Vagina (tissue), 2 donors: ENCODE measurements at regions of chr1 and their contacts with region 1.

Region 1: GRCh38 chr1:184664042-184664655 is 90.5 kb downstream of the EDEM3 start:
- DNase-seq: no peak
- H3K4me3 ChIP-seq: peak overlapping the region; percentile 25 to 27
- H3K27ac ChIP-seq: no peak overlapping the region
- H3K4me1 ChIP-seq: peaks cover 6% of the 10 kb centered on the region
- H3K27me3 ChIP-seq: no peaks in the 10 kb centered on the region
- CTCF ChIP-seq: peak; percentile 52 to 96 (median 93)
- POLR2A ChIP-seq: no peak

Region 2: GRCh38 chr1:184075055-184076029 is 588.8 kb before region 1 on chr1:
- intact Hi-C with region 1: loop called (anchors 10 kb)
- DNase-seq: no peak
- H3K4me3 ChIP-seq: no peak overlapping the region
- H3K27ac ChIP-seq: peak overlapping the region; percentile 59
- H3K4me1 ChIP-seq: peaks cover 5% of the 10 kb centered on the region
- H3K27me3 ChIP-seq: no peaks in the 10 kb centered on the region
- CTCF ChIP-seq: peak; percentile 68 to 83 (median 79)
- POLR2A ChIP-seq: no peak

Region 3: GRCh38 chr1:184222652-184223052 is 441.5 kb before region 1 on chr1:
- intact Hi-C with region 1: loop called (anchors 10 kb)
- DNase-seq: no peak
- H3K4me3 ChIP-seq: peak overlapping the region in 1 of 2 donors; percentile 11
- H3K27ac ChIP-seq: peak overlapping the region; percentile 9
- H3K4me1 ChIP-seq: no peaks in the 10 kb centered on the region
- H3K27me3 ChIP-seq: no peaks in the 10 kb centered on the region
- CTCF ChIP-seq: peak; percentile 82 to 93 (median 85)
- POLR2A ChIP-seq: no peak

Region 4: GRCh38 chr1:184379111-184379946 is 284.8 kb before region 1 on chr1:
- intact Hi-C with region 1: loop called (anchors 5 kb)
- DNase-seq: no peak
- H3K4me3 ChIP-seq: no peak overlapping the region
- H3K27ac ChIP-seq: no peak overlapping the region
- H3K4me1 ChIP-seq: no peaks in the 10 kb centered on the region
- H3K27me3 ChIP-seq: no peaks in the 10 kb centered on the region
- CTCF ChIP-seq: no peak
- POLR2A ChIP-seq: no peak

Region 5: GRCh38 chr1:184563308-184563707 is 100.8 kb before region 1 on chr1:
- intact Hi-C with region 1: loop called (anchors 10 kb)
- DNase-seq: no peak
- H3K4me3 ChIP-seq: no peak overlapping the region
- H3K27ac ChIP-seq: peak overlapping the region; percentile 80
- H3K4me1 ChIP-seq: peaks cover 34% of the 10 kb centered on the region
- H3K27me3 ChIP-seq: no peaks in the 10 kb centered on the region
- CTCF ChIP-seq: peak; percentile 26 to 33 (median 28)
- POLR2A ChIP-seq: no peak